ENCODE measurements at regions of chr7 and their contacts with region 1.

Region 1: DNA sequence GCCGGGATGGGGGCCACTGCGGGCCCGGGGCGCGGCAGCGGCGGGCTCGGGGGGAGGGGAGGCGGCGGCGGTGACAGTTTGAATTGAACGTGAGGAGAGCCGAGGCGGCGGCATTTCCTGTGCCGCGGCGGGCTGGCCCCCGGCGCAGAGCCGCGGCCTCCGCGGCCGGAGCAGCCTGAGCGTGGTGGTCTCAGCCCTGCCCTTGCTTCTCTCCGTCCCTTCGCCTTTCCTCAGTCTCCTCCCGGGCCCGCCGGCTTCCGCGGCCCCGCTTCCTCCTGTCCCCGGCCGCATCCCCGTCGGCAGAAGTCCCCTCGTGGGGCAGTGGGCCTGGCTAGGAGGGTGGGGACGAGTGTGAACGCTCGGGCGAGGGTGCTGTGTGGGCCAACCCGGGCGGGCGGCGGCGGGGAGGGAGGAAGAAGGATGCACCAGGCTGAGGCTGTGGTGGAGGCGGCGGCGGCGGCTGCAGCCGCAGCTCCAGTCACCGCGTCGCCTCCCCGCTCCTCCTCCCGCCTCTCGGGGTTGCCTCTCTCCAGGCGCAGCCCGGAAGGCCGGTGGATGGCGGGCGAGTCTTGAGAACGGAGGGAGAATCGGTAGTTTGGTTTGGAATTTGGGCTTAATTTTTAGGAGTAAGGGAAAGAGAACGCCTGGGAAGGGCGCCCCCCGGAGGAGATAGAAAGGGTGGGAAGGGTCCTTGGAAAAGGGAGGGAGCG is 690 bp downstream of the SEPTIN7 start:
- DNase-seq: peak; percentile 80
- H3K4me3 Mint-ChIP-seq: peak overlapping the region; percentile 97
- H3K27ac Mint-ChIP-seq: peak overlapping the region; percentile 98
- H3K4me1 Mint-ChIP-seq: peaks cover 44% of the 10 kb centered on the region
- H3K27me3 Mint-ChIP-seq: no peaks in the 10 kb centered on the region

Region 2: GRCh38 chr7:35037526-35038339 is 763.8 kb before region 1 on chr7:
- CTCF ChIA-PET with region 1: no interaction called
- POLR2A ChIA-PET with region 1: no interaction called
- intact Hi-C with region 1: loop called (anchors 1 kb)
- DNase-seq: peak; percentile 91
- H3K4me3 Mint-ChIP-seq: peak overlapping the region; percentile 78
- H3K27ac Mint-ChIP-seq: peak overlapping the region; percentile 51
- H3K4me1 Mint-ChIP-seq: peaks cover 30% of the 10 kb centered on the region
- H3K27me3 Mint-ChIP-seq: no peaks in the 10 kb centered on the region

Region 3: GRCh38 chr7:35437619-35438275 is 363.8 kb before region 1 on chr7:
- CTCF ChIA-PET with region 1: no interaction called
- POLR2A ChIA-PET with region 1: no interaction called
- intact Hi-C with region 1: no loop called
- DNase-seq: no peak
- H3K4me3 Mint-ChIP-seq: no peak overlapping the region
- H3K27ac Mint-ChIP-seq: no peak overlapping the region
- H3K4me1 Mint-ChIP-seq: no peaks in the 10 kb centered on the region
- H3K27me3 Mint-ChIP-seq: no peaks in the 10 kb centered on the region

Region 4: DNA sequence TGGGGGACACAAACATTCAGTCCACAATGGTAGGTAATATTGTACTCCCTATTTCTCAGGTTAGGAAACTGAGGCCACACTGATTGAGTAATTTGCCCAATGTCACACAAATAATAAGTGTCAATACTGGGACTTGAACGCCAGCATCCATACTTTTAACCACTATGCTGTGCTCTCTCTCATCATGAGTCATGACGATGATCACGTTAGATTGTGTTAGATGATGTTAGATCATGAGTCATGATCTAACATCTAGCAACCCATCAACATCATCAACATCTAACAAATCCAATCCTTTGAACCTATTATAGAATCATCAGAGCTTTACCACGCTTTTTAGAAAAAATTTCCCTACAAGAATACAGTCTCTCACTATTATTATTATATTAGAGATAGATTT is 78.5 kb before region 1 on chr7:
- CTCF ChIA-PET with region 1: interaction called, 46 read pairs
- POLR2A ChIA-PET with region 1: interaction called, 35 read pairs
- intact Hi-C with region 1: loop called (anchors 1 kb)
- DNase-seq: no peak
- H3K4me3 Mint-ChIP-seq: peak overlapping the region; percentile 29
- H3K27ac Mint-ChIP-seq: peak overlapping the region; percentile 91
- H3K4me1 Mint-ChIP-seq: peaks cover 62% of the 10 kb centered on the region
- H3K27me3 Mint-ChIP-seq: no peaks in the 10 kb centered on the region

Region 5: GRCh38 chr7:35839860-35840854 is 38.6 kb after region 1 on chr7:
- CTCF ChIA-PET with region 1: no interaction called
- POLR2A ChIA-PET with region 1: interaction called, 6 read pairs
- intact Hi-C with region 1: loop called (anchors 5 kb)
- DNase-seq: no peak
- H3K4me3 Mint-ChIP-seq: no peak overlapping the region
- H3K27ac Mint-ChIP-seq: no peak overlapping the region
- H3K4me1 Mint-ChIP-seq: peaks cover 32% of the 10 kb centered on the region
- H3K27me3 Mint-ChIP-seq: no peaks in the 10 kb centered on the region

Region 6: DNA sequence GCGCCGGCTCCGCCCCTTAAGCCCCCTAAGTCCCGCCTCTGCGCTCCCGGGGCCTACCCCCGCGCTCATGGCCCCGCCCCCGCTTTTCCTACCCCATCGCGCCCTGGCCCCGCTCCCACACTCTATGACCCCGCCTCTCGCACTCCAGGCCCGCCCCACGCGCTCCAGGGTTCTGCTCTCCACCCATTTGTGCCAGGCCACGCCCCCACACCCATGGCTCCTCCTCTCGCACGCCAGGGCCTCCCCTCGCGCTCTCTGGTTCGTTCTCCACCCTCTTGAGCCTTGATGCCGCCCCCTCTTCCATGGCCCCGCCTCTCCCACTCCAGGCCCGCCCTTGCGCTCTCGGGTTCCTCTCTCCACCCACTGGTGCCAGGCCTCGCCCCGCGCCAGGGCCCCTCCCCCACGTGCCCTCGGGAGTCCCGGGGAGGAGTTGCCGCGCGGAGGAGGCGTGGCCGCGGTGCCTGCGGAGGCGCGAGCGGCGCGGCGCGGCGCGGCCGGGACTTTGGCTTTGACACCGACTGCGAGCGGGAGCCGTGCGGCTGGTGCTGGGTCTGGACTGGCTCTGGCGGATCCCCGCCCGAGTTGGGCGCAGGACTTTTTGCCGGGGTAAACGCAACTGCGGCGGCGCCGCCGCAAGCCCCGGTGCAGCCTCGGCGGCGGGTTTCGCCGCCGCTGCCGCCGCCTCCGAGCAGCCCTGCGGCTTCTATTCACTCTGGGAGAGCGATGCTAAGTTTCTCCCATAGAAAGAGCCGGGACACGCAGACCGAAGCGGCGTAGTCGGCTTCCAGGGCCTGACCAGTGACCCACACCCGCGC is 351.4 kb after region 1 on chr7 and contains the start of gene EEPD1:
- CTCF ChIA-PET with region 1: no interaction called
- POLR2A ChIA-PET with region 1: no interaction called
- intact Hi-C with region 1: loop called (anchors 10 kb)
- DNase-seq: peak; percentile 100
- H3K4me3 Mint-ChIP-seq: peak within 1 kb of the TSS; percentile 75
- H3K27ac Mint-ChIP-seq: peak within 1 kb of the TSS; percentile 21
- H3K4me1 Mint-ChIP-seq: peaks cover 27% of the 10 kb centered on the region
- H3K27me3 Mint-ChIP-seq: no peaks in the 10 kb centered on the region
- total RNA-seq, gene EEPD1: 1.2 to 1.3 TPM

Region 7: GRCh38 chr7:36224934-36225858 is 423.6 kb after region 1 on chr7:
- CTCF ChIA-PET with region 1: no interaction called
- POLR2A ChIA-PET with region 1: no interaction called
- intact Hi-C with region 1: no loop called
- DNase-seq: no peak
- H3K4me3 Mint-ChIP-seq: no peak overlapping the region
- H3K27ac Mint-ChIP-seq: no peak overlapping the region
- H3K4me1 Mint-ChIP-seq: no peaks in the 10 kb centered on the region
- H3K27me3 Mint-ChIP-seq: no peaks in the 10 kb centered on the region

Region 8: GRCh38 chr7:37342688-37343471 is 1541.3 kb after region 1 on chr7:
- CTCF ChIA-PET with region 1: no interaction called
- POLR2A ChIA-PET with region 1: no interaction called
- intact Hi-C with region 1: loop called (anchors 10 kb)
- DNase-seq: peak; percentile 85
- H3K4me3 Mint-ChIP-seq: peak overlapping the region; percentile 96
- H3K27ac Mint-ChIP-seq: peak overlapping the region; percentile 94
- H3K4me1 Mint-ChIP-seq: peaks cover 79% of the 10 kb centered on the region
- H3K27me3 Mint-ChIP-seq: no peaks in the 10 kb centered on the region

Measured in activated CD4-positive, alpha-beta memory T cell treated with anti-CD3 and anti-CD28 coated beads for 36 hours (primary cell).